ENCODE measurements at regions of chr14 and their contacts with region 1.

Region 1: DNA sequence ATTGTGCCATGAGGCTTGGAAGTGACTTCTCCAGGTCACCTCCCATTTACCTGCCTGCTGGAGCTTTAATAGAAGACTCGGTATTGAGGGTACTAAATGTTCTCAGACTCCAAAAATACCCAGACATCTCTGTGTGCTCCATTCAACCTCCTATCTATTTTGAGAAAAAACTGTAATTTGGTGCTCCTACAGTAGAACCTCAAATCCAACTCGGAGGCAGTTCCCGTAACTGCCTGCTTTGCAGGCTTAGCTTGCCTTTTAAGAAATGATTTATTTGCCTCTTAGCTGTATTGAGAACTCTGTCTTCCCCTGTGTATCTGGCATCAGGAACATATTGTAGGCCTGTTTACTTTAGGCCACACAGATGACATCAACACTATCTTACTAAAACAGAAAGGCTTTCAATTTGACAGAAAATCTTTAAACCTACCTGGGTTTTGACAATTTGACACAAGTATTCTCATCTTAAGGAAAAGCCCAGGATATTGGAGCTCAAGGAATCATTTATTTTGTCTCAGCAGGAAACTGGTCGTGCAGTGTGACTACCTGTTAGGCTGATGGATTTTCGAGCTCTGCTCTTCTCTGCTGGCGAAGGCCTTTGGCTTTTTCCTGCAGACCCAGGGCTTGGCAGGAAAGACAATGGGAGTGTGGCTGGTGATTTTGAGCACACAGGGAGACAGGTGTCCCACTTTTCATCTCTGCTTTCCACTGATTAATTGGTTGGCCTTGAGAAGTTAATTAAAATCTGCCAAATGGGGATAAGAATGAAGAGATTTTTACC is 314.8 kb downstream of the SNAPC1 start:
- DNase-seq: no peak
- ATAC-seq: no peak
- H3K4me3 ChIP-seq: peak overlapping the region in 1 of 2 donors; percentile 17
- H3K4me3 Mint-ChIP-seq: peak overlapping the region in 1 of 3 donors; percentile 50
- H3K27ac ChIP-seq: peak overlapping the region; percentile 31
- H3K27ac Mint-ChIP-seq: peak overlapping the region in 1 of 2 donors; percentile 35
- H3K4me1 ChIP-seq: peaks cover 17 to 32% of the 10 kb centered on the region in 2 experiments
- H3K4me1 Mint-ChIP-seq: peaks cover 28 to 44% (median 37%) of the 10 kb centered on the region in 3 donors
- H3K27me3 ChIP-seq: no peaks in the 10 kb centered on the region
- H3K27me3 Mint-ChIP-seq: peaks cover 4% of the 10 kb centered on the region in 2 donors

Region 2: GRCh38 chr14:62053188-62053587 is 23.8 kb before region 1 on chr14:
- CTCF ChIA-PET with region 1: no interaction called
- POLR2A ChIA-PET with region 1: no interaction called
- DNase-seq: no peak
- ATAC-seq: no peak
- H3K4me3 ChIP-seq: no peak overlapping the region
- H3K4me3 Mint-ChIP-seq: no peak overlapping the region
- H3K27ac ChIP-seq: no peak overlapping the region
- H3K27ac Mint-ChIP-seq: no peak overlapping the region
- H3K4me1 ChIP-seq: peaks cover 0 to 3% of the 10 kb centered on the region in 2 experiments
- H3K4me1 Mint-ChIP-seq: no peaks in the 10 kb centered on the region
- H3K27me3 ChIP-seq: peaks cover 0 to 4% of the 10 kb centered on the region in 2 experiments
- H3K27me3 Mint-ChIP-seq: peaks cover 10 to 12% of the 10 kb centered on the region in 2 donors

Region 3: GRCh38 chr14:62064751-62065323 is 12.2 kb before region 1 on chr14:
- CTCF ChIA-PET with region 1: interaction called in 1 of 2 experiments, 3 read pairs
- POLR2A ChIA-PET with region 1: interaction called in 1 of 2 experiments, 10 read pairs
- DNase-seq: no peak
- ATAC-seq: no peak
- H3K4me3 ChIP-seq: no peak overlapping the region
- H3K4me3 Mint-ChIP-seq: no peak overlapping the region
- H3K27ac ChIP-seq: no peak overlapping the region
- H3K27ac Mint-ChIP-seq: no peak overlapping the region
- H3K4me1 ChIP-seq: no peaks in the 10 kb centered on the region
- H3K4me1 Mint-ChIP-seq: no peaks in the 10 kb centered on the region
- H3K27me3 ChIP-seq: no peaks in the 10 kb centered on the region
- H3K27me3 Mint-ChIP-seq: peaks cover 4 to 22% of the 10 kb centered on the region in 2 donors

Measured in T-cell (primary cell).